ENCODE measurements at regions of chr7 and their contacts with region 1.

Region 1: GRCh38 chr7:27150568-27151340 is 1.6 kb downstream of the HOXA3 start:
- H3K4me3 ChIP-seq: peak overlapping the region; percentile 59
- H3K27ac ChIP-seq: peak overlapping the region; percentile 99
- H3K4me1 ChIP-seq: peaks cover 11% of the 10 kb centered on the region
- CTCF ChIP-seq: peak; percentile 87

Region 2: GRCh38 chr7:27130540-27131389 is 20.0 kb before region 1 on chr7 and contains the start of gene HOXA4:
- CTCF ChIA-PET with region 1: interaction called, 12 read pairs
- POLR2A ChIA-PET with region 1: interaction called, 5 read pairs
- H3K4me3 ChIP-seq: peak within 1 kb of the TSS; percentile 52
- H3K27ac ChIP-seq: peak within 1 kb of the TSS; percentile 100
- H3K4me1 ChIP-seq: peaks cover 78% of the 10 kb centered on the region
- CTCF ChIP-seq: no peak; the same call in 1 of the 2 replicates

Region 3: GRCh38 chr7:27172823-27173510 is 22.2 kb after region 1 on chr7:
- CTCF ChIA-PET with region 1: interaction called, 5 read pairs
- POLR2A ChIA-PET with region 1: interaction called, 25 read pairs
- H3K4me3 ChIP-seq: peak overlapping the region; percentile 76
- H3K27ac ChIP-seq: peak overlapping the region; percentile 100
- H3K4me1 ChIP-seq: peaks cover 10% of the 10 kb centered on the region
- CTCF ChIP-seq: no peak

Region 4: GRCh38 chr7:27179503-27180430 is 29.0 kb after region 1 on chr7:
- CTCF ChIA-PET with region 1: interaction called, 5 read pairs
- POLR2A ChIA-PET with region 1: interaction called, 25 read pairs
- H3K4me3 ChIP-seq: peak overlapping the region; percentile 76
- H3K27ac ChIP-seq: peak overlapping the region; percentile 99
- H3K4me1 ChIP-seq: peaks cover 36% of the 10 kb centered on the region
- CTCF ChIP-seq: peak; percentile 83

Measured in HEK293 (cell line).